CD8-positive, alpha-beta T cell (primary cell): ENCODE measurements at regions of chr5 and their contacts with region 1.

Region 1: DNA sequence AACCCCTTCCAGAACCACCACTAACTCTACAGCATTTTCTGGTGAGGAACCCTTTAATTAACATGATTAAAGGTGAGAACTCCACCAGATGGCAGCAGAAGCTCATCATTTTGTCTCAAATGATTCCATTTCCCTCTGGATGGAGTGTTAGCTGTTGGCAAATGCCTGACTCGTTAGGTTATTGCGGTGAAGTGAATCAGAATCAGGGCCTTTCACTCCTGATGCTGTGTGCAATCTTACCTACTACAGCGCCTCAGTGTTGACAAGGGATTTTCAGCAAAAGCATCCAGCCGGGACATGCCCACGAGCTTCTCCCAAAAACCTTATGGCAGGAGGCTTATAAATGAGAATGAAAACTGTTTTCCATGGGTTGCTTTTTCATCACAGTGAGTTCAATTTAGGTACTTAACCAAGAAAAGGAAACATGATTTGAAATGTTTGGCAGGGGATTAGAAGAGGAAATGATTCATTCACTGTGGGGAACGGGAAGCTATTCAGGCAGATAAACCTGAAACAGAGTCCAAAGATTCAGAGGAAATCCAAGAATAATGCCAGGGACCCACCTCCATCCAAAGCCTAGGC is 48.0 kb upstream of the CAST start:
- DNase-seq: peak in 8 of 9 experiments; percentile 5 to 73 (median 44)
- ATAC-seq: peak; percentile 61
- H3K4me3 ChIP-seq: no peak overlapping the region
- H3K4me3 Mint-ChIP-seq: no peak overlapping the region
- H3K27ac ChIP-seq: no peak overlapping the region
- H3K27ac Mint-ChIP-seq: no peak overlapping the region
- H3K4me1 ChIP-seq: no peaks in the 10 kb centered on the region
- H3K4me1 Mint-ChIP-seq: peaks cover 4% of the 10 kb centered on the region
- H3K27me3 ChIP-seq: no peaks in the 10 kb centered on the region
- H3K27me3 Mint-ChIP-seq: peaks cover 10% of the 10 kb centered on the region
- CTCF ChIP-seq: peak; percentile 64

Region 2: DNA sequence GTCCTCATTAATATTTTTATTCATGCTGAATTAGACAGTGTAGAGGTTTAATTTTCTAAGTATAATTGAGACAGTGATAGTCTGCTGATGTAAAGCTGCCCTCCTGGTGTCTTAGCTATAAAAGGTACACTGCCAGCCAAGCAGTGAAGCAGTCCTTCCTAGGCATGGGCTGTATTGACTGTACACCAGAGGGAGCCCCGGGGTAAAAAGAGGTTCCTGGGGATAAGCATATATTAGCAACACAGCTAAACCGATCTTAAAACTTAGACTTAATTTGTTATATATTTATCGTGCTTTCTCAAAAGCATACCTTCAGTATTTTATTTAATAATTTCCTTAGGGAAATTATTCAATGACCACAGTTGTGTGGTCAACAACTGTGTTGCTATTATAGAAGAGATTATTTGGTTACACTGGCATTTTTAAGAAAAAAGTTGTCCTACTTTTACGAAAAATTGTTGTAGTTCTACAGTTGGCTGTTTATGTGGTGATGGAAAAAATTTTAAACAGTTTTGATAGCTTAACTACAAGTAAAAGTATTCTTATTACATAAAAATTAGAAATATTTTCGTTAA is 721.3 kb before region 1 on chr5:
- CTCF ChIA-PET with region 1: no interaction called
- POLR2A ChIA-PET with region 1: no interaction called
- intact Hi-C with region 1: no loop called
- DNase-seq: peak in 4 of 9 experiments; percentile 36 to 50 (median 40)
- ATAC-seq: peak; percentile 56
- H3K4me3 ChIP-seq: no peak overlapping the region
- H3K4me3 Mint-ChIP-seq: no peak overlapping the region
- H3K27ac ChIP-seq: no peak overlapping the region
- H3K27ac Mint-ChIP-seq: no peak overlapping the region
- H3K4me1 ChIP-seq: no peaks in the 10 kb centered on the region
- H3K4me1 Mint-ChIP-seq: no peaks in the 10 kb centered on the region
- H3K27me3 ChIP-seq: no peaks in the 10 kb centered on the region
- H3K27me3 Mint-ChIP-seq: no peaks in the 10 kb centered on the region
- CTCF ChIP-seq: no peak

Region 3: GRCh38 chr5:96651948-96652753 is 38.0 kb after region 1 on chr5:
- CTCF ChIA-PET with region 1: interaction called, 6 read pairs
- POLR2A ChIA-PET with region 1: no interaction called
- intact Hi-C with region 1: loop called in 1 of 2 experiments (anchors 5 kb)
- DNase-seq: peak in 2 of 9 experiments; percentile 18 to 30
- ATAC-seq: peak; percentile 48
- H3K4me3 ChIP-seq: no peak overlapping the region
- H3K4me3 Mint-ChIP-seq: no peak overlapping the region
- H3K27ac ChIP-seq: no peak overlapping the region
- H3K27ac Mint-ChIP-seq: no peak overlapping the region
- H3K4me1 ChIP-seq: peaks cover 12% of the 10 kb centered on the region
- H3K4me1 Mint-ChIP-seq: peaks cover 7% of the 10 kb centered on the region
- H3K27me3 ChIP-seq: no peaks in the 10 kb centered on the region
- H3K27me3 Mint-ChIP-seq: peaks cover 17% of the 10 kb centered on the region
- CTCF ChIP-seq: peak; percentile 28

Region 4: DNA sequence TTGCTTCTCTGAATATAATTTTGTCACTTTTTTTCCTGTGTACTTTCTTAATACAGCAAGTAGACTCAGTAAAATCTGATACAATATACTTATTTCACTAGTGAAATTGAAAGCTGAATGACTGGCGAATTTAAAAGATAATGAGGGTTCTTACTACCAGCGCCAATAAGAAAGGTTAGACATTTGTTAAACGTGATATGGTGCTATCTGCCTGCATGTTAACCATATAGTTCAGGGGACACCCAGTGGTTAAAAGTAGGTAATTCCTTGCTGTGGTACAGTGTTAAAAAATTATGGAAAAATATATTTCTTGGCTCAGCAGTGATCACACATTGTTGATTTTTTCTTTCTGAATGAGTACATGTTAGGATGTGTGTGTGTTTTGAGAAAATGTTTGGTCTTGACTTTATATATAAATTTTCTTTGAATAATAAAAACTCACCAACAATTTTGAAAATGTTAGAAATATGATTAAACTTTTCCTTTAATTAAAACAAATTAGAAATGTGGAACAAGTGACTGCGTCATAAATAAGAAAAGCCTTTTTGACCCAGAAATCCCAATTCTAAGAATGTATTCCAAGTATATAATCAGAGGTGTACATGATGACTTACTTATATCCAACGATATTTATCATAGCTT is 73.7 kb after region 1 on chr5:
- CTCF ChIA-PET with region 1: interaction called, 52 read pairs
- POLR2A ChIA-PET with region 1: interaction called, 3 read pairs
- intact Hi-C with region 1: loop called (anchors 1 kb)
- DNase-seq: peak in 2 of 9 experiments; percentile 42 to 61
- ATAC-seq: peak; percentile 75
- H3K4me3 ChIP-seq: no peak overlapping the region
- H3K4me3 Mint-ChIP-seq: no peak overlapping the region
- H3K27ac ChIP-seq: no peak overlapping the region
- H3K27ac Mint-ChIP-seq: no peak overlapping the region
- H3K4me1 ChIP-seq: no peaks in the 10 kb centered on the region
- H3K4me1 Mint-ChIP-seq: peaks cover 19% of the 10 kb centered on the region
- H3K27me3 ChIP-seq: no peaks in the 10 kb centered on the region
- H3K27me3 Mint-ChIP-seq: no peaks in the 10 kb centered on the region
- CTCF ChIP-seq: no peak

Region 5: GRCh38 chr5:96702503-96703383 is 88.5 kb after region 1 on chr5:
- CTCF ChIA-PET with region 1: interaction called, 11 read pairs
- POLR2A ChIA-PET with region 1: no interaction called
- intact Hi-C with region 1: no loop called
- DNase-seq: peak; percentile 49 to 91 (median 72)
- ATAC-seq: peak; percentile 82
- H3K4me3 ChIP-seq: peak overlapping the region; percentile 72 to 76
- H3K4me3 Mint-ChIP-seq: peak overlapping the region; percentile 82
- H3K27ac ChIP-seq: peak overlapping the region; percentile 73 to 82
- H3K27ac Mint-ChIP-seq: peak overlapping the region; percentile 94
- H3K4me1 ChIP-seq: peaks cover 7% of the 10 kb centered on the region
- H3K4me1 Mint-ChIP-seq: peaks cover 30% of the 10 kb centered on the region
- H3K27me3 ChIP-seq: no peaks in the 10 kb centered on the region
- H3K27me3 Mint-ChIP-seq: no peaks in the 10 kb centered on the region
- CTCF ChIP-seq: no peak

Region 6: DNA sequence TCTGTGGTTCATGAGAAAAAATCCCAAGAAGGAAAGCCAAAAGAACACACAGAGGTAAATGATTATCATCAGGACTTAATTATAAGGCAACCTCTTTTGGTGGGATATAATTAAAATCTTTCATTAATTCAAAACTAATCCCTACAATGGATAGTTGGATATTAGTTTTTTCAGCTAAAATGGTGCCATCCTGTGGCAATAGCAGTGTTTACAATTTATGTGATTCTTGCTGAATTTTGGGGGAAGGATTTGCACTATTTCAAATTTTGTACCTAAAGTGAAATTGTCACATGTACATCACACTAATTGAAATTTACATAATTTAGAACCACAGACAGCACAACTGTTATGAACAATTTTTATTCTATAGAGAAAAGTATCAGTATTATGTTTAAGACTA is 115.0 kb after region 1 on chr5:
- CTCF ChIA-PET with region 1: interaction called, 15 read pairs
- POLR2A ChIA-PET with region 1: interaction called, 3 read pairs
- intact Hi-C with region 1: loop called (anchors 1 to 2 kb)
- DNase-seq: peak in 1 of 9 experiments; percentile 23
- ATAC-seq: no peak
- H3K4me3 ChIP-seq: no peak overlapping the region
- H3K4me3 Mint-ChIP-seq: no peak overlapping the region
- H3K27ac ChIP-seq: no peak overlapping the region
- H3K27ac Mint-ChIP-seq: no peak overlapping the region
- H3K4me1 ChIP-seq: no peaks in the 10 kb centered on the region
- H3K4me1 Mint-ChIP-seq: peaks cover 4% of the 10 kb centered on the region
- H3K27me3 ChIP-seq: no peaks in the 10 kb centered on the region
- H3K27me3 Mint-ChIP-seq: no peaks in the 10 kb centered on the region
- CTCF ChIP-seq: peak; percentile 25

Region 7: GRCh38 chr5:96823900-96824351 is 209.7 kb after region 1 on chr5:
- CTCF ChIA-PET with region 1: no interaction called
- POLR2A ChIA-PET with region 1: no interaction called
- intact Hi-C with region 1: loop called in 1 of 2 experiments (anchors 5 kb)
- DNase-seq: no peak
- ATAC-seq: peak; percentile 56
- H3K4me3 ChIP-seq: no peak overlapping the region
- H3K4me3 Mint-ChIP-seq: no peak overlapping the region
- H3K27ac ChIP-seq: no peak overlapping the region
- H3K27ac Mint-ChIP-seq: no peak overlapping the region
- H3K4me1 ChIP-seq: peaks cover 24% of the 10 kb centered on the region
- H3K4me1 Mint-ChIP-seq: peaks cover 45% of the 10 kb centered on the region
- H3K27me3 ChIP-seq: no peaks in the 10 kb centered on the region
- H3K27me3 Mint-ChIP-seq: no peaks in the 10 kb centered on the region
- CTCF ChIP-seq: no peak